Activated CD8-positive, alpha-beta memory T cell treated with anti-CD3 and anti-CD28 coated beads, Interleukin-2, amount 10 ng/mL, durations not matched to agents 7 days and 5 days (primary cell): ENCODE measurements at regions of chr2 and their contacts with region 1.

Region 1: DNA sequence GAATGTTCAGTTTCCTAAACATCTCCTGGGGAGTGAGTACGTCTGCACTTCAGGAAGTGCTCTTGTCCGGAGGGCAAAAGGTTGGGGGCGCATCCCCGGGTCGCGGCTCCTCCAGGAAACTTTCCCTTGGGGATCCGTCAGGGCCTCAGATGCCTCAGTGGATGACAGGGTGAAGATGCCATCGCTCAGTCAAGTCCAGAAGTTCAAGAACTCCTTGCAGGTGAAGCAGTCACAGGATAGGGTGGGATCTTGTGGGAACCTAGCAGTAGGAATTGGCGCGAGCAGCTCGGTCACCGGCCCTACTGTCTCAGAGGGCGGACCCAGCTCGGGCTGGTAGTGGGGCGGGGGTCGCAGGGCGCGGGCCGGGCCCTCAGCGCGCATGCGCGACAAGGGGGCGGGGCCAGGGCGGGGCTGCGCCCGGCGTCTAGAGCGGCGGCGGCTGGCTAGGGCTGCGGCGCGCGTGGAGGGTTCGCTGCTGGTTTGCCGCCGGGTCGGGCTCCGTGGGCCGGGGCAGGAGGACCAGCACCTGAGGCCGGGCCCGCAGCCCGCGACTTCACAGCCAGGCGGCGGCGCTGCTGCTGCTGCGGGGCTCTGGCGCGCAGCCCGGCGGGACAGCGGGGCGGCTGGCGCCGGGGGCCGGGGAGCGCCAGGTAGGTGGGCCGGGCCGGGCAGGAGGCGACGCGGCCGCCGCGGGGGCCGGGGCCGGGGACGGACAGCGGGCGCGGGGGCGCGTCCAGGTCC is at the start of gene INPP4A:
- DNase-seq: peak; percentile 82
- ATAC-seq: peak; percentile 71
- H3K4me3 Mint-ChIP-seq: peak within 1 kb of the TSS; percentile 88
- H3K27ac Mint-ChIP-seq: peak within 1 kb of the TSS; percentile 90
- H3K4me1 Mint-ChIP-seq: peaks cover 40% of the 10 kb centered on the region
- H3K27me3 Mint-ChIP-seq: no peaks in the 10 kb centered on the region
- total RNA-seq, gene INPP4A: 144 to 229 TPM

Region 2: DNA sequence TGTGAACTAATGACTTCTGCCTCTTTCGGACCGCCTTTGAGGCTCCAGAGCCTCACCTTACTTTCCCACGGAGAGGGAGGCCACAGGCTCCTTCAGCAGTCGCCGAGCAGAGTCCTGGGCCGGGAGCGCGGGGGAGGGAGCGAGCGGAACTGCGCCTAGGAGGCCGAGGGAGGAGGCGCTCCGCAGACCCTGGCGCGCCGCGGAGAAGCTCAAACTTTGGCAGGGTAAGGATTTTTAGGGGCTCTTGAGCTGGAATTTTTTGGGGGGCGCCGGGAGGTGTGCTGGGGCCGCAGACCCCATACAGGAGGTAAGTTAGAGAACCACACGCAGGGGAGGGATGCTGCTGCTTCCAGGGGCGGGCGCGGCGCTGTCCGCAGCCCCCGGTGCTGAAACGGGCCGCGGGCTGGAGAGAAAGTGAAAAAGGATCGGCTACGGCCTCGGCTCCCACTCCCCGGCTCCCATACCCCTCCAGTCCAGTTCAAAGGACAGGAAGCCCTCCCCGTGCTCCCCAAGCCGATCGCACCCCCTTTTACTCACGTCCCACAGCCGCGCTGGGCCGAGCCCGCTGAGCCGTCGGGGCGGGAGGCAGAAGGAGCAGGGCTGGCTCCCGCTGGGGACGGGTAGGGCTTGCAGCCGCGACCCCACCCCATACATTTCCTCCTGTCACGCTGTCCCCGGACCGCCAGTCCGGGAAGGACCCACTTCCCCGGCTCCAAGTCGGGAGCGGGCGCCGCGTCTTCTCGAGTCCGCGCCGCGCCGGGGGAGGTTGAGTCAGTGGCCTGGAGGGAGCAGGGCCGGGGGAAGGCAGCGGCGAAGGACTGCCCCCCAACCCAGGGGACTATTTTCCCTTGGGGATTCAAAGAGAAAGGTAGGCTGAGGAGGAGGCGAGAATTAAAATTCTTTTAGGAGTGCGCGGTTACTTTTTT is 98.0 kb before region 1 on chr2 and contains the start of gene CNGA3:
- CTCF ChIA-PET with region 1: no interaction called
- DNase-seq: no peak
- ATAC-seq: no peak
- H3K4me3 Mint-ChIP-seq: no peak within 1 kb of the TSS
- H3K27ac Mint-ChIP-seq: no peak within 1 kb of the TSS
- H3K4me1 Mint-ChIP-seq: peaks cover 9% of the 10 kb centered on the region
- H3K27me3 Mint-ChIP-seq: peaks cover 82% of the 10 kb centered on the region
- total RNA-seq, gene CNGA3: not detected

Region 3: DNA sequence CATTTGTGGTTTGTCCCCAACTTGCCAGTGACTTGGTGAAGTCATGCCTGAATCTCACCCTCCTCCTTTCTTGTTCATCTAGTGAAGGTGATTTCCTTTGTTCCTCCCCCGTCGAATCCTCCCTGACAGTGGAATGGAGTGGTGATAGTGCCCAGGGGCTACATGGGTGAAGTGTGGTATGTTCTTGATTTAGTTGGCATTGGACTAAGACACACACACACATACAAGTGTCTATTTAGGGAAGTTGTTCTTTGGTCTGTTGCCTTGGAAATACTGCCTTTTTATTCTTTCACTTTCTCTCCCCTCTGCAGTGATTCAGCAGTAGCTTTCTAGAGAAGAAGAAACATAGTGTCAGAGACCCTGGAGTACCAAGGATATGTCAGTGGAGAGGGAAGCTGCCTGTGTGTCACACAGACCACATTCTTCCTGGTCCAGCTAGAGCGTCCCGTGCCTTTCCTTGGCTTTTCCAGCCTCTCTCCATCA is 10.9 kb after region 1 on chr2:
- CTCF ChIA-PET with region 1: interaction called, 79 read pairs
- DNase-seq: no peak
- ATAC-seq: peak; percentile 59
- H3K4me3 Mint-ChIP-seq: peak overlapping the region; percentile 66
- H3K27ac Mint-ChIP-seq: peak overlapping the region; percentile 89
- H3K4me1 Mint-ChIP-seq: peaks cover 95% of the 10 kb centered on the region
- H3K27me3 Mint-ChIP-seq: no peaks in the 10 kb centered on the region

Region 4: DNA sequence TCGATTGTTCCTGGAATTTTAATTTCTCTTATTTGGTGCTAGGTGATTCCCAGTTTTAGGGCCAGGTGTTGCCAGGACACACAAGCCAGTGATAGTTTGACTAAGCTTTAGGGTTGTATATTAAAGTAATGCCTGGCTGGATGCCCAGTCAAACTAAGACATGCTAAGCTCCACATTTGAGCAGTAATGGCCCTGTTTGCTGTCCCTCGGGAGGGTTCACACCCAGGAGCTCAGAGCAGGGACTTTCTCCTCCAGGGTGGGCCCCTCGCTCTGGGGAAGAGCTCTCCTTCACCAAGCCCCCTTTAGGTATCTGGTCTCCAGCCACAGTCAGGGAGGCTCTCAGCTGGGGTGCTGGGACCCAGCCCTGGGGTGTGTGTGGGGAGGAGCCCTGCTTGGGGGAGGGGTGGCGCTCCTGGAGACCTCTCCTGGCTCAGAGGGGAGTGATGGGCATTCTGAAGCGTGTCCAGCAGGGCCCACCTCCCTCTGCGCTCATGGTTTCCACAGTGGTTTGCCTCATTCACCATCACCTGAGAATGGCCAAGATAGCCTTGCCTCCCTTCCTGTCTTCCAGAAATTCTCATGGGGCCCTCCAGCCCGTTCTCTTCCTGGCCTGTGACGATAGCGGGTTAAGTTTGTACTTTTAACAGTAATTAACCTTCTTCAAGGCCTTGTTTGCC is 31.7 kb after region 1 on chr2:
- CTCF ChIA-PET with region 1: interaction called, 13 read pairs
- DNase-seq: no peak
- ATAC-seq: no peak
- H3K4me3 Mint-ChIP-seq: no peak overlapping the region
- H3K27ac Mint-ChIP-seq: peak overlapping the region; percentile 66
- H3K4me1 Mint-ChIP-seq: peaks cover 100% of the 10 kb centered on the region
- H3K27me3 Mint-ChIP-seq: no peaks in the 10 kb centered on the region